ENCODE measurements at regions of chr7 and their contacts with region 1.

Region 1: GRCh38 chr7:87152107-87152844 is at the start of gene DMTF1:
- DNase-seq: peak; percentile 67 to 94 (median 87)
- ATAC-seq: peak; percentile 75
- H3K4me3 ChIP-seq: peak within 1 kb of the TSS; percentile 63 to 85
- H3K4me3 Mint-ChIP-seq: peak within 1 kb of the TSS; percentile 99
- H3K27ac ChIP-seq: peak within 1 kb of the TSS; percentile 92 to 97
- H3K27ac Mint-ChIP-seq: peak within 1 kb of the TSS; percentile 97
- H3K4me1 ChIP-seq: peaks cover 42% of the 10 kb centered on the region
- H3K4me1 Mint-ChIP-seq: peaks cover 48% of the 10 kb centered on the region
- H3K27me3 ChIP-seq: no peaks in the 10 kb centered on the region
- H3K27me3 Mint-ChIP-seq: no peaks in the 10 kb centered on the region
- CTCF ChIP-seq: no peak
- total RNA-seq, gene DMTF1: 97.9 to 103 TPM

Region 2: GRCh38 chr7:86574006-86574405 is 578.3 kb before region 1 on chr7:
- CTCF ChIA-PET with region 1: no interaction called
- POLR2A ChIA-PET with region 1: no interaction called
- intact Hi-C with region 1: no loop called
- DNase-seq: no peak
- ATAC-seq: no peak
- H3K4me3 ChIP-seq: no peak overlapping the region
- H3K4me3 Mint-ChIP-seq: no peak overlapping the region
- H3K27ac ChIP-seq: no peak overlapping the region
- H3K27ac Mint-ChIP-seq: no peak overlapping the region
- H3K4me1 ChIP-seq: no peaks in the 10 kb centered on the region
- H3K4me1 Mint-ChIP-seq: no peaks in the 10 kb centered on the region
- H3K27me3 ChIP-seq: no peaks in the 10 kb centered on the region
- H3K27me3 Mint-ChIP-seq: no peaks in the 10 kb centered on the region
- CTCF ChIP-seq: no peak

Region 3: GRCh38 chr7:86939197-86939814 is 213.0 kb before region 1 on chr7:
- CTCF ChIA-PET with region 1: interaction called, 13 read pairs
- POLR2A ChIA-PET with region 1: interaction called, 3 read pairs
- intact Hi-C with region 1: loop called (anchors 1 kb)
- DNase-seq: peak in 5 of 9 experiments; percentile 4 to 67 (median 39)
- ATAC-seq: peak; percentile 63
- H3K4me3 ChIP-seq: no peak overlapping the region
- H3K4me3 Mint-ChIP-seq: no peak overlapping the region
- H3K27ac ChIP-seq: no peak overlapping the region
- H3K27ac Mint-ChIP-seq: no peak overlapping the region
- H3K4me1 ChIP-seq: no peaks in the 10 kb centered on the region
- H3K4me1 Mint-ChIP-seq: no peaks in the 10 kb centered on the region
- H3K27me3 ChIP-seq: no peaks in the 10 kb centered on the region
- H3K27me3 Mint-ChIP-seq: peaks cover 8% of the 10 kb centered on the region
- CTCF ChIP-seq: peak; percentile 41

Region 4: DNA sequence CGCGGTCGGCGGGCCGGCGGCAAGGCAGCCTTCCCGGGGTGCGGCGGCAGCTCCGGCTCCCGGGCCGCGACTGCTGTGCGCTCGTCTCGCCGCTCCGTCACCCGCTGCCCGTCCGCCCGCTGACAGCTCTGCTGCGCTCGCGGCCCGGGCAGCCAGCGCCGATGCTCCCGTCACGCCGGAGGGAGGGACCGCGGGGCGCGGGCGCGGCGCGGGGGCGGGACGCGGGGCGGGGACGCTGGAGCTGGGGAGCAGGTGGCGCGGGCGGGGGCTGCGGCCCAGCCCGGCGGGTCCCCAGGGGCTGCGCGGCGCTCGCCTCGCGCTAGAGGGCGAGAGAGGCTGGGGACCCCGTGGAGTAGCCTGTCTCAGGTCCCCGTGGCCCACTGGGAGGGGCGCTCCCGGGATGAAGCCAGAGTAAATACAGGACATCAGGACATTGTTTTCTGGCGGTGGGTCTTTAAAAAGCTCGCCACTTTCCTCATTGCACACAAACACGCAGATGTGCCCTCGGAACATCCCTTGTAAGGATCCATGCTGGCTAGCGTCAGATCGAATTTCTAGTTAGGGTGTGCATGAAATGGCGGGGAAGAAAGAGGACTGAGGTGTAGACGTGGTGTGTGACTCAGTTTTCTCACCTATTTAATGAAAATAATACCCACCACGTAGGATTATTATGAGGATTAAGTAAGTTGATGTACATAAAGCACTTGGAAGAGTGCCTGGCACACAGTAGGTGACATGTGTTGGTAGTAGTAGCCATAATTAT is 92.6 kb before region 1 on chr7 and contains the start of gene ELAPOR2:
- CTCF ChIA-PET with region 1: interaction called, 3 read pairs
- POLR2A ChIA-PET with region 1: interaction called, 5 read pairs
- intact Hi-C with region 1: loop called (anchors 1 to 2 kb)
- DNase-seq: peak; percentile 64 to 89 (median 80)
- ATAC-seq: peak; percentile 94
- H3K4me3 ChIP-seq: peak within 1 kb of the TSS; percentile 43 to 62
- H3K4me3 Mint-ChIP-seq: peak within 1 kb of the TSS; percentile 87
- H3K27ac ChIP-seq: peak within 1 kb of the TSS; percentile 16 to 38
- H3K27ac Mint-ChIP-seq: peak within 1 kb of the TSS; percentile 77
- H3K4me1 ChIP-seq: peaks cover 10% of the 10 kb centered on the region
- H3K4me1 Mint-ChIP-seq: peaks cover 16% of the 10 kb centered on the region
- H3K27me3 ChIP-seq: no peaks in the 10 kb centered on the region
- H3K27me3 Mint-ChIP-seq: peaks cover 5% of the 10 kb centered on the region
- CTCF ChIP-seq: no peak
- total RNA-seq, gene ELAPOR2: 5.1 to 5.7 TPM

Region 5: DNA sequence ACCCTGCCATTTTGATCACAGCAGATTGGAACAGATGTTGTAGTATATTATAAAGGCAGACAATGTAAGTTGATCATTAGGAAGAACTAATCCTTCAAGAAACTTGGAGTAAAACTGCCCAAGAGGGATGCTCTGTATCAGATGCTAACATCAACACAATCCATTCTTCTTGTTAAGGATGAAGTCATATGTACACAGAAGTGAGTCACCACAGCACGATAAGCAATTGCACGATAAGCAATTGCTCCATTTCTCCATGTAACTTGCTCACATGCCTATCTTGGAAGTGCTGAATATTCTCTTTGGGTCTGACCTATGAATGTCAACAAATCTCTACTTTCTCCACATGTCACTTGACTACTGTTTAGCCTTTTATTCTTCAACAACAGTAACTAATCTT is 41.5 kb before region 1 on chr7:
- CTCF ChIA-PET with region 1: no interaction called
- POLR2A ChIA-PET with region 1: no interaction called
- intact Hi-C with region 1: no loop called
- DNase-seq: no peak
- ATAC-seq: no peak
- H3K4me3 ChIP-seq: no peak overlapping the region
- H3K4me3 Mint-ChIP-seq: no peak overlapping the region
- H3K27ac ChIP-seq: no peak overlapping the region
- H3K27ac Mint-ChIP-seq: no peak overlapping the region
- H3K4me1 ChIP-seq: no peaks in the 10 kb centered on the region
- H3K4me1 Mint-ChIP-seq: no peaks in the 10 kb centered on the region
- H3K27me3 ChIP-seq: no peaks in the 10 kb centered on the region
- H3K27me3 Mint-ChIP-seq: peaks cover 11% of the 10 kb centered on the region
- CTCF ChIP-seq: no peak

Region 6: DNA sequence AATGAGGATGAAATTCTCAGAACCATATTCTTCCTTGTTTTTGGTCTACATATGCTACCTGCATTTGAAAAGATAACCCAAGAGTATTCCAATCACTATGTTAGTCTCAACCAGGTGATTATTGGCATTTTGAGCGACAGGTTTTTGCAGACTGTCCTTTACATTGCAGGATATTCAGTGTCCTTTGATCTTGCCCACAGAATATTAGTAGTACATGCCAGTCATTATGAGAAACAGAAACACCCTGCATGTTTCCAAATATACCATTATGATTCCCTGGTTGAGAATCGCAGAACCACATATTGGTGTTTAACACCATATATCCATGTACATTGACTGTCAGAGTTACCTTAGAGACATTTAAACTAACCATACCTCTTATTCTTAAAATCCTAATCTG is 36.7 kb after region 1 on chr7:
- CTCF ChIA-PET with region 1: interaction called, 4 read pairs
- POLR2A ChIA-PET with region 1: interaction called, 11 read pairs
- intact Hi-C with region 1: no loop called
- DNase-seq: no peak
- ATAC-seq: no peak
- H3K4me3 ChIP-seq: no peak overlapping the region
- H3K4me3 Mint-ChIP-seq: no peak overlapping the region
- H3K27ac ChIP-seq: no peak overlapping the region
- H3K27ac Mint-ChIP-seq: no peak overlapping the region
- H3K4me1 ChIP-seq: no peaks in the 10 kb centered on the region
- H3K4me1 Mint-ChIP-seq: peaks cover 28% of the 10 kb centered on the region
- H3K27me3 ChIP-seq: no peaks in the 10 kb centered on the region
- H3K27me3 Mint-ChIP-seq: no peaks in the 10 kb centered on the region
- CTCF ChIP-seq: no peak

Region 7: DNA sequence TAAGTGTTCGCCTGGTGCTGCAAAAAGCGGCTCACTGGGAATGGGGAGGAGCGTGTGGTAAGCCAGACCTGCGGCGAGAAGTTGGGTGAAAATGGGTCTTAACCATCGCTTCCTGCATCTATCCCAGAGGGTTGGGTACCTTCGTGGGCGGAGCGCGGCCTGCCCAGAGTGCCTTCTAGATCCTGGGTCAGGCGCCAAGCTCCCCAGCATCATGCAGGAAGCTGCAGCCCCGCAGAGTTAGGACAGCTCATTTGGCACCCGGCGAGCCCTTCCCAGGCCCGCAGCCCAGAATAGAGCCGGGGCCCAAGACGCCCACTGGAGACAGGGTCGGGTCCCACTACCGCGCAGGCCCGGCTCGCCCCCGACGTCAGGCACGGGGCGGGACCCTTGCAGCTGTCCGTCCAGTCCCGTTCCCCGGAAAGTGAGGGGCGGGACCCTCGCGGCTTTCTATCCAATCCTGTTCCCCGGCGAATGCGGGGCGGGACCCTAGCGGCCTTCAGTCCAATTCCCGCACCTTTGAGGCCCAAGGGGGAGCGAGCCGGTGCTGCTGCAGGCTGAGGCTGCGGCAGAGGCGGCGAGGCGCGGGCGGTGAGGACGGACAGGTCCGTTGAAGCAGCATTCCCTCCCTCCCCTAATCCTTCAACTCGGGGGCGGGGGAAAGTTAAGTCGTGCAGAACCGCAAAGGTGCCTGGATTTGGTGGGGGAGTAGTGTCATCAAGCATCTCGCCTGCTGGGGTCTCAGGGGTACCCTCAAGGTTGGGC is 193.1 kb after region 1 on chr7 and contains the start of gene CROT:
- CTCF ChIA-PET with region 1: interaction called, 3 read pairs
- POLR2A ChIA-PET with region 1: interaction called, 6 read pairs
- intact Hi-C with region 1: loop called in 1 of 2 experiments (anchors 2 kb)
- DNase-seq: peak; percentile 84 to 96 (median 94)
- ATAC-seq: peak; percentile 96
- H3K4me3 ChIP-seq: peak within 1 kb of the TSS; percentile 91 to 96
- H3K4me3 Mint-ChIP-seq: peak within 1 kb of the TSS; percentile 95
- H3K27ac ChIP-seq: peak within 1 kb of the TSS; percentile 87 to 89
- H3K27ac Mint-ChIP-seq: peak within 1 kb of the TSS; percentile 96
- H3K4me1 ChIP-seq: peaks cover 25% of the 10 kb centered on the region
- H3K4me1 Mint-ChIP-seq: peaks cover 50% of the 10 kb centered on the region
- H3K27me3 ChIP-seq: no peaks in the 10 kb centered on the region
- H3K27me3 Mint-ChIP-seq: no peaks in the 10 kb centered on the region
- CTCF ChIP-seq: no peak
- total RNA-seq, gene CROT: 5.3 to 7.2 TPM

Region 8: DNA sequence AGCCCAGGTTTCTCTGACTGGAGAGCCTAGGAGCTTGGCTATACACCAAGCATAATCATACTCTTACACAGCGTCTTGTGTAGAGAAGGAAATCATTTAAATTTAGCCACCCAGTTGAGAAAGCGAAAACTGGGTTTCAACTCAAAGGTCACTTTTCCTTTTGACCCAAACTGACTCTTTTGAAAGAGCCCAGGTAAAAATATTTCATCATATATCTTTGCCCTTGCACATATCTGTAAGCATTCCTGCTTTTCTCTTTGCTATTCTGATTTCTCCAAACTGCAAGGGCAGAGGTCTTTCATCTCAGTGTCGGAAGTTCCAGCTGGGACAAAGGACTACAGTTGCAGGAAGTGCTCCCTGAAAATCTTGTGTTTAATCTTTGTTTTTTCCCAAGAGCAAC is 345.2 kb after region 1 on chr7:
- CTCF ChIA-PET with region 1: no interaction called
- POLR2A ChIA-PET with region 1: no interaction called
- intact Hi-C with region 1: no loop called
- DNase-seq: no peak
- ATAC-seq: no peak
- H3K4me3 ChIP-seq: no peak overlapping the region
- H3K4me3 Mint-ChIP-seq: no peak overlapping the region
- H3K27ac ChIP-seq: no peak overlapping the region
- H3K27ac Mint-ChIP-seq: no peak overlapping the region
- H3K4me1 ChIP-seq: no peaks in the 10 kb centered on the region
- H3K4me1 Mint-ChIP-seq: peaks cover 2% of the 10 kb centered on the region
- H3K27me3 ChIP-seq: no peaks in the 10 kb centered on the region
- H3K27me3 Mint-ChIP-seq: no peaks in the 10 kb centered on the region
- CTCF ChIP-seq: no peak